Cardiac septum (tissue), 1 donor: ENCODE measurements at regions of chr20 and their contacts with region 1.

Region 1: GRCh38 chr20:62759981-62760431 is 36.3 kb upstream of the MRGBP start:
- DNase-seq: no peak

Region 2: GRCh38 chr20:62739581-62740285 is 20.3 kb before region 1 on chr20:
- intact Hi-C with region 1: loop called (anchors 1 kb)
- DNase-seq: peak; percentile 73

Region 3: GRCh38 chr20:62832212-62832922 is 72.4 kb after region 1 on chr20:
- intact Hi-C with region 1: no loop called
- DNase-seq: peak; percentile 89